Calu3 (cell line): ENCODE measurements at regions of chr7 and their contacts with region 1.

Region 1: DNA sequence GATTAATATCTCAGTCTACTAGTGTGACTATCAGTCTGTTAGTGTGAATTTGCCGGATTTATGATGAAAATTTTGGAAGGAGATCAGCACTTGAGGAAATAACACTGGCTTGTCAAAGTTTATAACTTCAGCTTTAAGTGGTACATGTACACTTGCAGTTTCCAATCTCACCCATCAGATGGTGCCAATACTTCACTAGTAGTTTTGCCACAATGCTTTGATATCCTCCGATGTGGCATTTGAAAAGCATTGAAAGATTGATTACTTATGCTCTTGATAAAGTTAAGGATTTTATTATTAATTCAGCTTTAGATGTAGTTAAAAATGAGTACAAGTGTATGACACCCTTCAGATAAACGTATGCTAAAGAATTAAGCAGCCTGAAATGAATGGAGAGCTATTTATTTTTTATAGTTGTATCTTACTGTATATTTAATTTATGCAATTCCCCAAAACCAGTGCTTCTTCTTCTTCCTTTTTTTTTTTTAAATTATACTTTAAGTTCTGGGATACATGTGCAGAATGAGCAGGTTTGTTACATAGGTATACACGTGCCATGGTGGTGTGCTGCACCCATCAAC is 98.2 kb downstream of the ANLN start:
- DNase-seq: peak; percentile 58
- H3K4me3 Mint-ChIP-seq: no peak overlapping the region
- H3K27ac Mint-ChIP-seq: no peak overlapping the region
- H3K4me1 Mint-ChIP-seq: peaks cover 19% of the 10 kb centered on the region
- H3K27me3 Mint-ChIP-seq: no peaks in the 10 kb centered on the region
- CTCF ChIP-seq: peak; percentile 90

Region 2: DNA sequence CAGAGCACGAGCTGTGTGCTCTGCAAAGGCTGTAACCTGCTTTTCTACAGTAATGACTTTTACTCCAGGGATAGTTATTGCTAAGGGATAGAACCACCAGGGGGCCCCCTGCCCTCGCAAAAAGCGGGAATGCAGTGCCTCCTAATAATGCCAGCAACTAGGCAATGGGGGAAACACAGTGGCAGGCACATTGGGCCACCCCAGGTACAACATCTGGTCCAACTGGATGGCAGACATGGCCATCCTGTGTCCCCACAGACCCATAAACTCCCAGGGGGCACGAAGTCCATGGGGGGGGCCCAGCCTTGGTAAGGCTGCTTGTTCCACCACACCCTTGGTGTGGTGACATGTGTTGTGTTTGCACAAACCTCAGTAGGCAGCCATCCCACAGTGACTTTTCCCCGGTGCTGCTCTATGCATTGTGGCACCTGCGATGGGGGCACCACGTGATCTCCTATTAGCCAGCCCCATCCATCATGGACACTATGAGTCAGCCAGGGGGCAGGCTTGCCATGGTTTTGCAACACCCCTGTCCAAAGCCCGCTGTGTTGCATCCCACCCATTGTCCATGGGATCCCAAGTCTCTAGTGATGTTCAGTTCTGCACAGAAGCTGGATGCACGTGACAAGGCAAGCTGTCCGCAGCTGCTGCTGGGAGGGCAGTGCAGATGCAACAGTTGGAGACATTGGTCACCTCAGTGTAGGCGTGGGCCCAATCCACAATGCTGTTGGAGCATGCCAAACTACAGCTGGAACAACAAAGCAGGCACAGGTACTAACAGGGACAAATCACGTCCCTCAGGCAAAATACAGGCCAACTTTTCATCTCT is 14.2 kb before region 1 on chr7:
- CTCF ChIA-PET with region 1: interaction called, 8 read pairs
- intact Hi-C with region 1: loop called (anchors 1 kb)
- DNase-seq: peak; percentile 89
- H3K4me3 Mint-ChIP-seq: no peak overlapping the region
- H3K27ac Mint-ChIP-seq: peak overlapping the region; percentile 68
- H3K4me1 Mint-ChIP-seq: peaks cover 49% of the 10 kb centered on the region
- H3K27me3 Mint-ChIP-seq: no peaks in the 10 kb centered on the region
- CTCF ChIP-seq: peak; percentile 88

Region 3: DNA sequence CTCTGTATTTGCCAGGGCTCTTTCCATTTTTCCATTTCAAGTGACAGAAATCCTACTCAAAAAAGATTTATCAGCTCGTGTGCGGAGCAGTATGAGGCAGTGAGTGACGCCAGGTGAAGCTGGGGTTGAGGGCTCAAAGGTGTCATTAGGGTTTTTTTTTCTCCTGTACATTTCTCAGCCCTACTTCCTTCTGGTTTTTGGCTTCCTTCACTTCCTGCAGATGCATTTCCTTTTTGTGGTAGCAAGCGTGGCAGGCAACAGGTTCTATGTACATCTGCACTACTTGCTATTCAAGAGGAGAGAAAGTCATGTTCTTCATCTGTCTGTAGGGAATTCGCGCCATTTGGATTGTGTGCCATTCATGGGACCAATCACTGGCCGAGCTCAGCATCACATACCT is 289.2 kb after region 1 on chr7:
- CTCF ChIA-PET with region 1: no interaction called
- intact Hi-C with region 1: no loop called
- DNase-seq: no peak
- H3K4me3 Mint-ChIP-seq: no peak overlapping the region
- H3K27ac Mint-ChIP-seq: no peak overlapping the region
- H3K4me1 Mint-ChIP-seq: peaks cover 30% of the 10 kb centered on the region
- H3K27me3 Mint-ChIP-seq: no peaks in the 10 kb centered on the region
- CTCF ChIP-seq: no peak

Region 4: DNA sequence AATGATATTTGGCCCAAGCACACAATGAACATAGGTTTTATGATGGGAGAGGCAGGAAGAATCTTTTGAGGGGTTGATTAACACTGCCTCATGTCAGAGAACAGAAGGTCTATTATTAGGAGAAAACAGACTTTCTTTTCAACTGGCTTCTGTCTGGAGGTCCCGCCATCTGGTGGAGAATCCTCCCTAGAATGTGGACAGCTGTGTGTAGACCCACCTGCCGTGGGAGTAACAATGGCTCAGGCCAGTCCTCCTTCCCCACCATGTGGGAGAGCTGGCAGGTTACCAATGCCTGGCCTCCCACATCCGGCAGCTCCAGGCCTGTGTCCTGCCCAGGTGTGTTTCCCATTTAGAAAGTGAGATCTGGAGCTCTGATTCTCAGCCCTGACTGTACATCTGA is 306.8 kb after region 1 on chr7:
- CTCF ChIA-PET with region 1: no interaction called
- intact Hi-C with region 1: loop called (anchors 5 kb)
- DNase-seq: peak; percentile 81
- H3K4me3 Mint-ChIP-seq: no peak overlapping the region
- H3K27ac Mint-ChIP-seq: no peak overlapping the region
- H3K4me1 Mint-ChIP-seq: peaks cover 36% of the 10 kb centered on the region
- H3K27me3 Mint-ChIP-seq: peaks cover 13% of the 10 kb centered on the region
- CTCF ChIP-seq: no peak

Region 5: DNA sequence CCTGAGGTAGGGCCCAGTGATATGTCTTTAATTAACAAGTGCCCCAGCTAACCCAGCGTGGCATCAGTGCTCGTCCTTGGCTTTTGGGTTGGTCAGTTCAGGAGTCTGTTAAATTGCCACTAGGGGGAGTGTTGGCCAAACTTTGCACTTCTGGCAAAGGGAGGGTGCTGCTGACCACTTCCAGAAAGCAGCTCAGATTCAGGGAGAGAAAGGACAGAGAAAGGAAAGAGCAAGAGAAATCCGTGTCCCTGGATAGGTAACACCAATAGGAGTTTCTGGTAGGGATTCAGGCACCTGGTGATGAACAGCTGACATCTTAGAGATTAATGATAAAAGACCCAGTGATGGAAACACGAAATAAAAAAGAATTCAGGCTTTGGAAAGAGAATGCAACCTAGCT is 479.5 kb after region 1 on chr7:
- CTCF ChIA-PET with region 1: interaction called, 17 read pairs
- intact Hi-C with region 1: loop called (anchors 2 kb)
- DNase-seq: peak; percentile 75
- H3K4me3 Mint-ChIP-seq: no peak overlapping the region
- H3K27ac Mint-ChIP-seq: no peak overlapping the region
- H3K4me1 Mint-ChIP-seq: peaks cover 51% of the 10 kb centered on the region
- H3K27me3 Mint-ChIP-seq: no peaks in the 10 kb centered on the region
- CTCF ChIP-seq: peak; percentile 87